SK-N-SH (cell line): ENCODE measurements at regions of chr3 and their contacts with region 1.

Region 1: GRCh38 chr3:58188173-58188564 is 22.6 kb downstream of the DNASE1L3 start:
- DNase-seq: no peak
- H3K4me3 ChIP-seq: no peak overlapping the region
- H3K27ac ChIP-seq: no peak overlapping the region
- H3K4me1 ChIP-seq: no peaks in the 10 kb centered on the region
- H3K27me3 ChIP-seq: no peaks in the 10 kb centered on the region
- CTCF ChIP-seq: no peak
- EP300 ChIP-seq: no peak
- RAD21 ChIP-seq: no peak

Region 2: GRCh38 chr3:58144478-58145325 is 43.5 kb before region 1 on chr3:
- CTCF ChIA-PET with region 1: no interaction called
- POLR2A ChIA-PET with region 1: no interaction called
- DNase-seq: no peak
- H3K4me3 ChIP-seq: no peak overlapping the region
- H3K27ac ChIP-seq: no peak overlapping the region
- H3K4me1 ChIP-seq: no peaks in the 10 kb centered on the region; a peak in 1 of 4 replicates
- H3K27me3 ChIP-seq: no peaks in the 10 kb centered on the region
- CTCF ChIP-seq: no peak
- EP300 ChIP-seq: no peak
- RAD21 ChIP-seq: no peak

Region 3: DNA sequence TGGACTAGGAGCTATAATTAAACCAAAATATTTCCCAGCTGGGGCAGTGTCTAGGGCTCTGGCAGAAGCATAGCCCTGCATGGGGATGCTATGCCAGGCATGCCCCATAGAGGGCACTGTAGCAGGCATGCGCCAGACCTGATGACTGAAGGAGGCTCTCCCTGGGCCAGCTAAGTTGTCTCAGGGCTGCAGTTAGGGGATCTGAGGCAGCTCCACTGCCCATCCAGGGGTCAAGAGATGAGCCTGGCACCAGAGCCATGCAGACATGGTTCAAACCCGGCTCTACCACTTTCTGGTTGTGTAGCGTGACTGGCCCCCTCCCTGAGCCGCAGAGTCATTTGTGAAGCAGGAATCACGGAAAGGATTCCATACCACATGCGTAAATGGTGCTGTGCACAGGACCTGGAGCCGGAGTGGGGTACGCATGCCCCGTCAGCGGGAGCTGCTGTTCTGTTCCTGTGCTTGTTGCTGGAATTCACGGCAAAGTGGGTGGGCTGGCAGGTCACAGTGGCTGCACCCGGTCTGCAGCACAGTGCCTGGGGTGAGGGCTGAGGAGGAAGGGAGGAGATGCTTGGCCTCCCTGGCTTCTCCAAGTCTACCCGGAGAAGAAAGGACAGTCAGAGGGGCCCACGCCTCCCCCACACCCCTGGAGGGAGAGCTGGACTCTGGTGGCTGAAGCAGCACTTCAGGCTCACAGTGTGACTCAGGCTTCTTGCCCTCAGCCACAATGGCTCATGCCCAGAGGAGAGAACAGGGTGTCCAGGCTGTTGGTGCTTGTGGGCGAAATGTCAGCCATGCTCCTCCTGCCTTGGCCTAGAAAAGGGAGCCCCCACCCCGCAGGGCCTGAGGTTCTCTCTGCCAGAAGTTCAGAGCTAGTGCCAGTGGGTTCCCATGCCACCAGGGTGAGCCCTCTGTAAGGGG is 20.5 kb before region 1 on chr3:
- CTCF ChIA-PET with region 1: interaction called, 12 read pairs
- POLR2A ChIA-PET with region 1: no interaction called
- DNase-seq: peak; percentile 79
- H3K4me3 ChIP-seq: peak overlapping the region in 1 of 2 experiments; percentile 44; a peak in 1 of 4 replicates
- H3K27ac ChIP-seq: no peak overlapping the region
- H3K4me1 ChIP-seq: peaks cover 0 to 25% of the 10 kb centered on the region in 2 experiments; a peak in 2 of 4 replicates
- H3K27me3 ChIP-seq: no peaks in the 10 kb centered on the region
- CTCF ChIP-seq: peak; percentile 91
- EP300 ChIP-seq: no peak
- RAD21 ChIP-seq: peak; percentile 21

Region 4: GRCh38 chr3:58200846-58201355 is 12.7 kb after region 1 on chr3:
- CTCF ChIA-PET with region 1: interaction called, 13 read pairs
- POLR2A ChIA-PET with region 1: no interaction called
- DNase-seq: no peak
- H3K4me3 ChIP-seq: no peak overlapping the region
- H3K27ac ChIP-seq: no peak overlapping the region
- H3K4me1 ChIP-seq: no peaks in the 10 kb centered on the region
- H3K27me3 ChIP-seq: no peaks in the 10 kb centered on the region
- CTCF ChIP-seq: no peak
- EP300 ChIP-seq: no peak
- RAD21 ChIP-seq: no peak

Region 5: GRCh38 chr3:58206406-58207011 is 18.3 kb after region 1 on chr3:
- CTCF ChIA-PET with region 1: interaction called, 13 read pairs
- POLR2A ChIA-PET with region 1: no interaction called
- DNase-seq: no peak
- H3K4me3 ChIP-seq: no peak overlapping the region
- H3K27ac ChIP-seq: no peak overlapping the region
- H3K4me1 ChIP-seq: no peaks in the 10 kb centered on the region
- H3K27me3 ChIP-seq: peaks cover under 1% of the 10 kb centered on the region; the same call in 1 of the 2 replicates
- CTCF ChIP-seq: no peak
- EP300 ChIP-seq: no peak
- RAD21 ChIP-seq: no peak

Region 6: GRCh38 chr3:58287354-58287753 is 99.2 kb after region 1 on chr3:
- CTCF ChIA-PET with region 1: no interaction called
- POLR2A ChIA-PET with region 1: no interaction called
- DNase-seq: no peak
- H3K4me3 ChIP-seq: no peak overlapping the region
- H3K27ac ChIP-seq: no peak overlapping the region
- H3K4me1 ChIP-seq: no peaks in the 10 kb centered on the region
- H3K27me3 ChIP-seq: no peaks in the 10 kb centered on the region
- CTCF ChIP-seq: no peak
- EP300 ChIP-seq: no peak
- RAD21 ChIP-seq: no peak

Region 7: DNA sequence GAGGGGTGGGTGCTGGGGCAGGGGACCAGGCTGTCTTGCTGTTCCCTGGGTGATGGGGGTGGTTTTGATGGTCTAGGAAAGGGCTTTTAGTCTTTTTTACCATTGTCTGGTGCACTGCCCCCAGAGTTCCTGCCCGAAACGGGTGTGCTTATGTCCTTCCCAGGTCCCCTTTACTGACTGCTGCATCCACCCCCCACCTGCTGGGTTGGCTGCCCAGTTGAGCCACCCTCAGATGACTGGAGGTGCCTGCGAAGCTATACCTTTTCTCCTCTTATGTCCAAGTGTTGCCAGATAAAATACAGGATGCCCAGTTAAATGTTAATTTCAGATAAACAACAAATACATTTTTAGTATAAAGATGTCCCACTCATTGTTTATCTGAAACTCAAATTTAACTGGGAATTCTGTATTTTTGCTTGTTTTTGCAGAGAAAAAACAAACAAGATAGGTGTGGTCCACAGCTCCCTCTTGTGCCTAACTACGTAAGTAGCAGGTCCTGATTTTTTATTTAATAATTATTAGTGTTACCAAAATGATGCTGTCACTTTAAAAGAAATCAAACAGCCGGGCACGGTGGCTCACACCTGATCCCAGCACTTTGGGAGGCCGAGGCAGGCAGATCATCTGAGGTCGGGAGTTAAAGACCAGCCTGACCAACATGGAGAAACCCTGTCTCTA is 111.8 kb after region 1 on chr3:
- CTCF ChIA-PET with region 1: interaction called, 45 read pairs
- POLR2A ChIA-PET with region 1: no interaction called
- DNase-seq: peak; percentile 47
- H3K4me3 ChIP-seq: no peak overlapping the region
- H3K27ac ChIP-seq: no peak overlapping the region
- H3K4me1 ChIP-seq: no peaks in the 10 kb centered on the region; a peak in 1 of 4 replicates
- H3K27me3 ChIP-seq: no peaks in the 10 kb centered on the region; the same call in 1 of the 2 replicates
- CTCF ChIP-seq: peak; percentile 85
- EP300 ChIP-seq: no peak
- RAD21 ChIP-seq: peak; percentile 79

Region 8: DNA sequence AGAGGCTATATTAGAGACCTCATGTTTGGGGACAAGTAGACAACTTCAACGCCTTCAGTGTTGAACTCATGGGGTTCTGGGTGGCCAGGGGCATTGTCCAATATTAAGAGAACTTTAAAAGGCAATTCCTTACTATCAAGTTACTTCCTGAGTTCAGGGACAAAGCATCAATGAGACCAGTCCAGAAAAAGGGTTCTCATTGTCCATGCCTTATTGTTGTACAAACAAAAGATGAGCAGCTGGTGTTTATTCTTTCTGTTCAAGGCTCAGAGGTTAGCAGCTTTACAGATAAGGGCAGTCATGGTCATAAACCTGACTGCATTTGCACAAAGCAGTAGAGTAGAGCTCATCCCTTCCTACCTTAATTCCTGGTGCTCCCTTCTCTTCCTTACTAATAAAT is 264.0 kb after region 1 on chr3:
- CTCF ChIA-PET with region 1: no interaction called
- POLR2A ChIA-PET with region 1: no interaction called
- DNase-seq: no peak
- H3K4me3 ChIP-seq: no peak overlapping the region
- H3K27ac ChIP-seq: no peak overlapping the region
- H3K4me1 ChIP-seq: no peaks in the 10 kb centered on the region
- H3K27me3 ChIP-seq: no peaks in the 10 kb centered on the region
- CTCF ChIP-seq: no peak
- EP300 ChIP-seq: no peak
- RAD21 ChIP-seq: no peak